ENCODE measurements at regions of chr9 and their contacts with region 1.

Region 1: GRCh38 chr9:93108291-93109041 is 12.4 kb downstream of the CARD19 start:
- DNase-seq: no peak
- H3K4me3 ChIP-seq: no peak overlapping the region
- H3K27ac ChIP-seq: no peak overlapping the region
- H3K4me1 ChIP-seq: peaks cover 3 to 51% (median 40%) of the 10 kb centered on the region in 4 experiments
- H3K27me3 ChIP-seq: no peaks in the 10 kb centered on the region

Region 2: GRCh38 chr9:93051680-93052089 is 56.8 kb before region 1 on chr9:
- CTCF ChIA-PET with region 1: interaction called, 10 read pairs
- POLR2A ChIA-PET with region 1: no interaction called
- DNase-seq: no peak
- H3K4me3 ChIP-seq: no peak overlapping the region
- H3K27ac ChIP-seq: no peak overlapping the region
- H3K4me1 ChIP-seq: peaks cover 4 to 29% (median 11%) of the 10 kb centered on the region in 4 experiments
- H3K27me3 ChIP-seq: no peaks in the 10 kb centered on the region

Region 3: GRCh38 chr9:93245122-93245970 is 136.9 kb after region 1 on chr9:
- CTCF ChIA-PET with region 1: no interaction called
- POLR2A ChIA-PET with region 1: no interaction called
- DNase-seq: no peak
- H3K4me3 ChIP-seq: no peak overlapping the region
- H3K27ac ChIP-seq: no peak overlapping the region
- H3K4me1 ChIP-seq: no peaks in the 10 kb centered on the region
- H3K27me3 ChIP-seq: peaks cover 0 to 15% (median 5%) of the 10 kb centered on the region in 5 experiments